GM12878 (cell line): ENCODE measurements at regions of chr16 and their contacts with region 1.

Region 1: DNA sequence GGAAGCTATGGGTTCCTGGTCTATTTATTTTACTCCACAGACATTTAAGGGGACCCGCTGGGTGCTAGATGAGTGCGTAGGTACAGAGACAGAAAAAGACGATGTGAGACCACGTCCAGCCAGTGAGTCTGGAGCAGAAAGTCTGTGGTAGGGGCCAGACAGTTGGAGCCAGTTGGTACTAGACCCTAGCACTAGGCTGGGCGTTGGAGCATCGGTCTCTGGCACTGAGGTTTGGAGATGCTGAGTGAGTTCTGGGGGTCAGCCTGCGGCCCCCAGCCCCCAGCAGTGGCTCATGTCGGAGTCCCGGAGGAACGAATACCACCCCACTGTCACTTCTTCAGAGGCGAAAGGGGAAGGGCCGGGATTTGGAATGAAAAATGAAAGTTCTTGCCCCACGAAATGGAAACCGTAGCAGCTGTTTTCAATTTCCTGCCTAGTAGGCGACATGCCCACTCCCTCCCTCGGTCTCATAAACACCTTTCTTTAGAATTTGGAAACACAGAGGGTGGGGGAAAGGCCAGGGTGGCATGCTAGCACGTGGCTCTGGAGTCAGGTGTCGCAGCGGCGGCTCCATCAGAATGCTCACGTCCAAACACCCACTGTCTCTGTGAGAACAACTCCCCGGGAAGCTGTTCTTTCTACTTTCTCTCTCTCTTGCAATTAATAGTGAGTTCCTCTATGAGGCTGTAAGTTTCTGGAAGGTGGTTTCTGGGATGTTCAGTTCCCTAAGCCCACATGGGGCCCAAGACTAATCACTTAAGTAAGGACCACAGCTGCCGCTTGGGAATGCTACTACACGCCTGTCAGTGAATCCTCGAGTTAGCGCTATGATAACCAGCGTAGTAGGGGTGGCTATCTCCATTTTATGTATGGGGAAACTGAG is 96.8 kb downstream of the IRF8 start:
- DNase-seq: peak; percentile 74
- ATAC-seq: peak; percentile 69
- H3K4me3 ChIP-seq: peak overlapping the region; percentile 55
- H3K27ac ChIP-seq: peak overlapping the region; percentile 93
- H3K4me1 ChIP-seq: peaks cover 88% of the 10 kb centered on the region
- H3K27me3 ChIP-seq: no peaks in the 10 kb centered on the region
- CTCF ChIP-seq: no peak
- EP300 ChIP-seq: peak; percentile 39 to 53; a peak in 2 of 4 replicates
- POLR2A ChIP-seq: peak; percentile 32; the same call in 1 of the 2 replicates
- RAD21 ChIP-seq: no peak

Region 2: GRCh38 chr16:86010680-86011141 is 14.9 kb after region 1 on chr16:
- CTCF ChIA-PET with region 1: interaction called, 100 read pairs
- POLR2A ChIA-PET with region 1: interaction called, 58 read pairs
- RAD21 ChIA-PET with region 1: interaction called, 157 read pairs
- SMC1A ChIA-PET with region 1: interaction called, 338 read pairs
- in situ Hi-C with region 1: no loop called
- intact Hi-C with region 1: no loop called
- DNase-seq: no peak
- ATAC-seq: peak; percentile 71
- H3K4me3 ChIP-seq: no peak overlapping the region
- H3K27ac ChIP-seq: peak overlapping the region; percentile 66
- H3K4me1 ChIP-seq: peaks cover 47% of the 10 kb centered on the region
- H3K27me3 ChIP-seq: no peaks in the 10 kb centered on the region
- CTCF ChIP-seq: no peak
- EP300 ChIP-seq: peak in 1 of 2 experiments; percentile 54; a peak in 2 of 4 replicates
- POLR2A ChIP-seq: no peak
- RAD21 ChIP-seq: no peak

Region 3: DNA sequence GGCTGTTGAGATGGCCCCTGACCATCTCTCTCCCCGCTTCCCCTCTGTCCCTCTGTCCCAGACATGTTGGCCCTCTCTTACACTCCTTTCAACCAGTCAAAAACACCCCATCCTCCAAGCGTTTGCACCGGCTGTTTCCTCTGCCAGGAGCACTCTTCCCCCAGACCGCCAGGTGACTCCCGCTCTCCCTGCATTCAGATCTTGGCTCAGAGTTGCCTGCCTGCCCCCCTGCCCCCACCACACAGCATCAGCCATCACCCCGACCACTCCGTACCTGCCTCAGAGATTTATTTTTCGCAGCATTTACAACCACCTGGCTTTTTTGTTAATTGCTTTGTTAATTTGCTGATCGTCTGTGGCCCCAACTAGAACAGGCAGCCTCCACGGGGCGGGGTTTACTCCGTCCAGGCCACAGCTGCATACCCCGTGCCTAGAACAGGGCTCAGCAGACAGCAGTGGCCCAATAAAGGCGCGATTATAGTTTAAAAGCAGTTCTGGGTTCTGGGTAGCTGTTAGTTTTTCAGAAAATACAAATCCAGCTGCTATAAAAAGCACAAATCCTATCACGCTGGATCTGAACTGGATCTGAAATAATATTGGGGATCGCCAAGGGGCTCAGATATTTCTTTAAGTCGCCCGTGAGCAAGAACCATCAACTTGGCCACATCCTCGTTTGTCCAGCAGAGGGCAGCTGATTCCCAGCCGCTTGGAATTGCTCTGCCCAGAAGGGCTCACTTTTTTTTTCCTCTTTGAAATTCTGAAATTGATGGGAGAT is 76.7 kb after region 1 on chr16:
- CTCF ChIA-PET with region 1: no interaction called
- POLR2A ChIA-PET with region 1: no interaction called
- RAD21 ChIA-PET with region 1: no interaction called
- SMC1A ChIA-PET with region 1: no interaction called
- in situ Hi-C with region 1: no loop called
- intact Hi-C with region 1: no loop called
- DNase-seq: no peak
- ATAC-seq: peak; percentile 83
- H3K4me3 ChIP-seq: no peak overlapping the region
- H3K27ac ChIP-seq: no peak overlapping the region
- H3K4me1 ChIP-seq: no peaks in the 10 kb centered on the region
- H3K27me3 ChIP-seq: no peaks in the 10 kb centered on the region; a peak in 2 of 4 replicates
- CTCF ChIP-seq: peak; percentile 73 to 85 (median 78)
- EP300 ChIP-seq: no peak
- POLR2A ChIP-seq: no peak
- RAD21 ChIP-seq: peak; percentile 67